ENCODE measurements at regions of chr11 and their contacts with region 1.

Region 1: GRCh38 chr11:30510750-30511149 is 75.4 kb downstream of the MPPED2 start:
- DNase-seq: no peak
- ATAC-seq: no peak
- H3K4me3 ChIP-seq: no peak overlapping the region
- H3K27ac ChIP-seq: no peak overlapping the region
- H3K4me1 ChIP-seq: no peaks in the 10 kb centered on the region
- H3K27me3 ChIP-seq: no peaks in the 10 kb centered on the region
- CTCF ChIP-seq: no peak

Region 2: DNA sequence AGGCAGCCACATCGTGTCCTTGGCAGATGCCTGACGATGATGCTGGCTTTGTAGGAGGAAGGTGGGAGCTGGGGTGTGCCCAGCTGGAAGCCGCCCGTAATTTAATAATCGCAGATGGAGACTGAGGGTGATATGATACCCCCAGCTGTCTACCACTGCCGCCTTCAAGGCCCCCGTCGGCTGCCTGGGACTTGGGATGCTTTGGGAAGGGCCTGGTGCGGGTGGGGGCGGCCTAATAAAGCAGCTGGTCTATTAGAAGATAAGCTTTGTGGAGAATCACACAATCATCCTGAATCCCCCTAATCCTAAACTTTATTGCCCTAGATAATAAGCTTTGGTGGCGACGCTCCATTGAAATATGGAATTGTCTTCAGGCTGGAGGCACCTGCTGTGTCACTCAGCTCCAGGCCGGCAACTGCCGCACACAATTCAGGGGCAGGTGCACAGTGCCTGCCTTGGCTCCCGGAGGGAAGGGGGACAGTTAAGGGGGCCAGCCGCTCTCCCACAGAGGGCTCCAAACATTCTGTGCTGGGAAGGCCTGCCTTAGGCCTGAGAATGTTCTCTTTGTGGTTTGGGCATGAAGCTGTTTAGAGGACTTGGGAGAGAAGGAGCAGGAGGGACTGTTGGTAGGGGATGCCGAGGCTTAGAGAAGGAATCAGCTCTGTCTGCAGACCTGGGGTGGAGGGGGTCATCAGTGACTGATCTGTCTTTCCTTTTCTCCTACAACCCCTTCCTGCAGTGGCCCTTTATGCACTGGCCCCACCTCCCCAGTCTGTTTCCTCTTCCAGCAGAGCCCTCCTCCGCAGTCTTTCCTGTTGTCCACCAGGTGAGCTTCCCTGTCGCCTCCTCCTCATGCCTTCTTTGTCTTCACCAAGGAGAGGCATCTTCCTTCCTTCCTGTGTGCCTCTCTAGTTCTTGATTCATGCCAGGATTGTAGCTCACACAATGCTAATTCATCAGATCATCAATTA is 122.6 kb before region 1 on chr11:
- intact Hi-C with region 1: loop called (anchors 10 kb)
- DNase-seq: no peak
- ATAC-seq: peak; percentile 13
- H3K4me3 ChIP-seq: no peak overlapping the region
- H3K27ac ChIP-seq: no peak overlapping the region
- H3K4me1 ChIP-seq: peaks cover 3% of the 10 kb centered on the region
- H3K27me3 ChIP-seq: no peaks in the 10 kb centered on the region
- CTCF ChIP-seq: no peak

Region 3: DNA sequence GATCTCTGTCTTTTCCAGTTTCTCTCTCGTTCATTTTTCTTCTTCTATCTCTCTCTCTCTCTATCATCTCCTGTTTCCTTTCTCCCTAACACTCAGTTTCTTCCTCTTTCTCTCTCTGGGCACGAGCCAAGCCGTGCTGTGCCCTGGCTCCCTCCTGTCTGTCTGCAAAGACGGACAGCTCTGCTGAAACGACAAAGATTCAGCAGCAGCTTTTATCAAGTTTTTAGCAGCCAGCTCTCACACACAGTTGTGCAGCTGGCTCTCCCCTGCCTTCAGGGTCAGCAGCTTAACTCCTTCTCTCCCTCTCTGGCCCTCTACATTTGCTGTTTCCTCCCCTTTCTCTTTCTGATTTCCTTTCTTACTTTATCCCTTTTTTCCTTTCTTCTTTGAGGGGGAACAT is 427.4 kb after region 1 on chr11:
- intact Hi-C with region 1: no loop called
- DNase-seq: no peak
- ATAC-seq: no peak
- H3K4me3 ChIP-seq: no peak overlapping the region
- H3K27ac ChIP-seq: no peak overlapping the region
- H3K4me1 ChIP-seq: no peaks in the 10 kb centered on the region
- H3K27me3 ChIP-seq: no peaks in the 10 kb centered on the region
- CTCF ChIP-seq: no peak

Measured in upper lobe of right lung (tissue), 1 donor.